Aorta (tissue), 5 donors: ENCODE measurements at regions of chr16 and their contacts with region 1.

Region 1: GRCh38 chr16:2715519-2715918 is 4.5 kb downstream of the PRSS27 start:
- DNase-seq: peak; percentile 80 to 90
- ATAC-seq: peak; percentile 73
- H3K4me3 ChIP-seq: no peak overlapping the region
- H3K27ac ChIP-seq: no peak overlapping the region
- H3K4me1 ChIP-seq: no peaks in the 10 kb centered on the region
- H3K27me3 ChIP-seq: no peaks in the 10 kb centered on the region

Region 2: GRCh38 chr16:2682209-2683021 is 33.1 kb before region 1 on chr16 and contains the start of gene KCTD5:
- intact Hi-C with region 1: loop called in 1 of 2 experiments (anchors 5 kb)
- DNase-seq: peak; percentile 97 to 98
- ATAC-seq: peak; percentile 98
- H3K4me3 ChIP-seq: peak within 1 kb of the TSS; percentile 62 to 73
- H3K27ac ChIP-seq: no peak within 1 kb of the TSS
- H3K4me1 ChIP-seq: peaks cover 0 to 1% of the 10 kb centered on the region in 2 donors
- H3K27me3 ChIP-seq: no peaks in the 10 kb centered on the region
- total RNA-seq, gene KCTD5: 14.3 to 15.5 TPM

Region 3: GRCh38 chr16:2777231-2777902 is 61.8 kb after region 1 on chr16 and contains the start of gene ELOB:
- intact Hi-C with region 1: no loop called
- DNase-seq: peak; percentile 92 to 97
- ATAC-seq: peak; percentile 94
- H3K4me3 ChIP-seq: peak within 1 kb of the TSS; percentile 67 to 87
- H3K27ac ChIP-seq: peak within 1 kb of the TSS; percentile 79 to 88
- H3K4me1 ChIP-seq: no peaks in the 10 kb centered on the region
- H3K27me3 ChIP-seq: no peaks in the 10 kb centered on the region
- total RNA-seq, gene ELOB: 146 to 174 TPM

Region 4: GRCh38 chr16:3087243-3088235 is 372.0 kb after region 1 on chr16:
- intact Hi-C with region 1: no loop called
- DNase-seq: no peak
- ATAC-seq: peak; percentile 42
- H3K4me3 ChIP-seq: no peak overlapping the region
- H3K27ac ChIP-seq: no peak overlapping the region
- H3K4me1 ChIP-seq: no peaks in the 10 kb centered on the region
- H3K27me3 ChIP-seq: no peaks in the 10 kb centered on the region